Left cardiac atrium (tissue), 4 donors: ENCODE measurements at regions of chr7 and their contacts with region 1.

Region 1: GRCh38 chr7:77542409-77542808 is 5.3 kb downstream of the PTPN12 start:
- DNase-seq: no peak
- ATAC-seq: no peak

Region 2: DNA sequence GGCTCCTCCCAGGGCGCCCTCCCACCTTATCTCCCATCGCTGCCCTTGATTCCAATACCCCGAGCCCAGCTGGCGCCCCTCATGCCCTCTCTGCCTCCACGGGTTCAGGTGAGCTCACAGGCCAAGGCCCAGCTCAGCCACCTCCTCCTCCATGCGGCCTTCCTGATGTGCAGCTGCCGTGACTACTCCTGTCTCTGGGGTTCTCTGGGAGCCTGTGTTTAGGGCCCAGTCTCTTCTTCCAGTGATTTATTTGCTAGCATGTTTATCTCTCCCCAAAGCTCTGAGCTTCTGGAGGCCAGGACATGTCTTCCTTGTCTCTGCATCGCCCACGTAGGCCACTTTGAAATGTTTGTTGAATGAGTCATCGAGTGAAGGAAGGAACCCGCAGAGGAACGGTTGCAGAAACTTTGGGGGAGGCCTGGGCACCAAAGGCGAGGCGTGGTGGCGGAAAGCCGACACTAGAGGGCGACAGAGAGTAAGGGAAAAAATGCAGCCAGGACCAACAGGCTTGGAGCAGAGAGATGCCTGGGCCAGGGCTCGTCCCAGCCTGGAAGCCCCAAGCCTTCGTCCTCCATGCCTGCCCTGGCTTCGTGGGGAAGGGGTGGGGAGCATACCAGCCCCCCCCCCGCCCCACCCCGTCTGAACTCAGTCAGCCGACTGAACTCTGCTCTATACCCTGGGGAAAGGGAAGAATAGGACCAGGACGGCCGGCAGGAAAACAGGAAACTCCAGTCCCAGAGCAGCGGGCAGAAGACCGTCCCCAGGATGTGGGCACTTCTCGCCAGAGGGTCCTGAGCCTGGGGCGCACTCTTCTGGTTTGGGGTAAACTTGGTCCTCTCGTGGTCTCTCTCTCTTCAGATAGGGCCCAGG is 1250.8 kb before region 1 on chr7:
- intact Hi-C with region 1: no loop called
- DNase-seq: peak; percentile 93
- ATAC-seq: peak; percentile 71 to 76

Region 3: DNA sequence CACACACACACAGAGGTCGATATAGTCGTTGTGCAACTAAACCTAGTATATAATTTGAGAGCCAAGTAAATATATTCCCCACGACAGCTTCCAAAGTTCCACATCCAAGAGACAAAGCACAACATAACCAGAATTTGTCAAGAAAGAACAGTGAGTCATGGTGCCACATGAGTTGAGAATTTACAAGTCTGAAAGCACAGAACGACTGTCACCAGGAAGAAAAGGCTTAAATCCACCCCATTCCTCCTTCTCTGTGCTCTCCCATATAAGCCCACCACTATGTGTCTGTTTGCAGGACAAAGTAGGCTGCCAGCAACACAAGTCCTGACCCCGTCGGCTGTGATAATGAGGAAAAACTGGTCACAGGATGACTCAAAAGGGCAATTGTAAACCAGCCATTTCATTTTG is 159.1 kb before region 1 on chr7:
- intact Hi-C with region 1: no loop called
- DNase-seq: no peak
- ATAC-seq: no peak

Region 4: GRCh38 chr7:77587272-77587671 is 44.9 kb after region 1 on chr7:
- intact Hi-C with region 1: loop called in 1 of 2 experiments (anchors 5 kb)
- DNase-seq: no peak
- ATAC-seq: no peak